ENCODE measurements at regions of chr3 and their contacts with region 1.

Region 1: GRCh38 chr3:185225080-185225479 is 28.8 kb downstream of the EHHADH start:
- DNase-seq: no peak
- ATAC-seq: no peak
- H3K4me3 ChIP-seq: no peak overlapping the region
- H3K27ac ChIP-seq: no peak overlapping the region
- H3K4me1 ChIP-seq: no peaks in the 10 kb centered on the region
- H3K27me3 ChIP-seq: no peaks in the 10 kb centered on the region
- CTCF ChIP-seq: no peak

Region 2: DNA sequence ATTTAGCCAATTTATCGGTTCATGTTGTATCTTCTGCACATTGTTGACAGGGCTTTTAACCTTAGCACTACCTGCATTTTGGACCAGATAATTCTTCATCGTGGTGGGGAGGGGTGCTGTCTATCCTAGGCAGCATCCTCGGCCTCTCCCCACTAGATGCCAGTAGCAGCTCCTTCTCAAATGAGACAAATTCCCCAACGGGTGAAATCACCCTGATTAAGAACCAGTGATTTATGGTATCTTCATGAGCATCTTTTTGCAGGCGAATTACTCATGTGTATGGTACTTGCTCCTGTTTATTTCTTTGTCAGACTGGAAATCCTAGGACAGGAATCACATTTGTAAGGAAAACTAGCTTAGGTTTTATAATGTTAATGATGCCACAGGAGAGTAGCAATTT is 140.2 kb before region 1 on chr3:
- CTCF ChIA-PET with region 1: no interaction called
- POLR2A ChIA-PET with region 1: no interaction called
- in situ Hi-C with region 1: no loop called
- intact Hi-C with region 1: no loop called
- DNase-seq: no peak
- ATAC-seq: no peak
- H3K4me3 ChIP-seq: no peak overlapping the region
- H3K27ac ChIP-seq: no peak overlapping the region
- H3K4me1 ChIP-seq: no peaks in the 10 kb centered on the region
- H3K27me3 ChIP-seq: peaks cover 21% of the 10 kb centered on the region
- CTCF ChIP-seq: no peak

Region 3: DNA sequence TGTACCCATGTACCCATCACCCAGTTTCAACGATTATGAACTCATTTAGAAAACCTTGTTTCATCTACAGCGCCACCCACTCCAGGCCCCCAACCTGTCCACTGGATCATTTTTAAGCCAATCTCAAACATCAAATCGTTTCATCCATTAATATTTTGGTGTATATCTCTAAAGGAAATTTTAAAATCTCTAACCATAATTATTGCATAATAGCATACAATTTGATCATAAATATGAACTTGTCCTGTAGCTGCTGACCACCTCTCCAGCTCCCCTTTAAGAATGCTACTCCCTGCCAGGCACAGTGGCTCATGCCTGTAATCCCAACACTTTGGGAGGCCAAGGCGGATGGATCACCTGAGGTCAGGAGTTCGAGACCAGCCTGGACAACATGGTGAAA is 69.4 kb before region 1 on chr3:
- CTCF ChIA-PET with region 1: no interaction called
- POLR2A ChIA-PET with region 1: interaction called, 16 read pairs
- in situ Hi-C with region 1: no loop called
- intact Hi-C with region 1: no loop called
- DNase-seq: no peak
- ATAC-seq: no peak
- H3K4me3 ChIP-seq: no peak overlapping the region
- H3K27ac ChIP-seq: no peak overlapping the region
- H3K4me1 ChIP-seq: no peaks in the 10 kb centered on the region
- H3K27me3 ChIP-seq: peaks cover 44% of the 10 kb centered on the region
- CTCF ChIP-seq: no peak

Measured in Panc1 (cell line).